ENCODE measurements at regions of chr2 and their contacts with region 1.

Region 1: GRCh38 chr2:225660262-225661131 is 261.0 kb downstream of the NYAP2 start:
- DNase-seq: peak; percentile 89
- ATAC-seq: peak; percentile 71
- H3K4me3 Mint-ChIP-seq: no peak overlapping the region
- H3K27ac Mint-ChIP-seq: no peak overlapping the region
- H3K4me1 Mint-ChIP-seq: no peaks in the 10 kb centered on the region
- H3K27me3 Mint-ChIP-seq: peaks cover 18% of the 10 kb centered on the region

Region 2: GRCh38 chr2:224357098-224357901 is 1303.2 kb before region 1 on chr2:
- CTCF ChIA-PET with region 1: no interaction called
- POLR2A ChIA-PET with region 1: no interaction called
- intact Hi-C with region 1: loop called in 1 of 2 experiments (anchors 1 kb)
- DNase-seq: peak; percentile 71
- ATAC-seq: peak; percentile 78
- H3K4me3 Mint-ChIP-seq: no peak overlapping the region
- H3K27ac Mint-ChIP-seq: no peak overlapping the region
- H3K4me1 Mint-ChIP-seq: no peaks in the 10 kb centered on the region
- H3K27me3 Mint-ChIP-seq: no peaks in the 10 kb centered on the region

Region 3: DNA sequence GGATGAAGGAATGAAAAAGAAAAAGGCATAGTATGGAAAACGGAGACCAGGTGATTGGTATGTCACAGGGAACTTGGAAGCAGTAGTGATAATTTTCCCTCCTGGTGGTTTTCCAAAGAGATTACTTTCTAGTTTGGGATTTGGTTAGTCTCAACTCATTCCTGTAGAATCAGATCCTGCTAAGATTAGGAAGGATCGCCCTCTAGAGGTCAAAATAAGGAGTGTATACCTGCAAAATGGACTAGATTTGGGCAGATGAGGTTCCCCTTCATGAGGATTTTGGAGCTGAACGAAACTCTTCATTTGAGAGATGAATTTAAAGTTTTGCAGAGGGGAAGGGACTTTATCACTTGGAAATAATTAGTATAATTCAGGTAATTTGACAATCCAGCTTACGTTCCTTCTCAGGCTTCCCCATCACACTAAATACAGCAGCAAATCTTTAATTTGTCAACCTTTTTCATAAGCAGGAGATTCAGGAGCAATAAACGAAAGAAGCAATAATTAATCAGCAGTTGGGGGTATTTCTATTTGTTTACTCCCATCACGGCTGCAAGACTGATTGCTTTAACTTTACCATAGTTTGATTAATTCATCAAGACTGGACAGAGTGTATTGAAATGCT is 1009.6 kb before region 1 on chr2:
- CTCF ChIA-PET with region 1: interaction called, 4 read pairs
- POLR2A ChIA-PET with region 1: no interaction called
- intact Hi-C with region 1: loop called in 1 of 2 experiments (anchors 2 kb)
- DNase-seq: no peak
- ATAC-seq: peak; percentile 53
- H3K4me3 Mint-ChIP-seq: no peak overlapping the region
- H3K27ac Mint-ChIP-seq: no peak overlapping the region
- H3K4me1 Mint-ChIP-seq: no peaks in the 10 kb centered on the region
- H3K27me3 Mint-ChIP-seq: peaks cover 2% of the 10 kb centered on the region

Region 4: DNA sequence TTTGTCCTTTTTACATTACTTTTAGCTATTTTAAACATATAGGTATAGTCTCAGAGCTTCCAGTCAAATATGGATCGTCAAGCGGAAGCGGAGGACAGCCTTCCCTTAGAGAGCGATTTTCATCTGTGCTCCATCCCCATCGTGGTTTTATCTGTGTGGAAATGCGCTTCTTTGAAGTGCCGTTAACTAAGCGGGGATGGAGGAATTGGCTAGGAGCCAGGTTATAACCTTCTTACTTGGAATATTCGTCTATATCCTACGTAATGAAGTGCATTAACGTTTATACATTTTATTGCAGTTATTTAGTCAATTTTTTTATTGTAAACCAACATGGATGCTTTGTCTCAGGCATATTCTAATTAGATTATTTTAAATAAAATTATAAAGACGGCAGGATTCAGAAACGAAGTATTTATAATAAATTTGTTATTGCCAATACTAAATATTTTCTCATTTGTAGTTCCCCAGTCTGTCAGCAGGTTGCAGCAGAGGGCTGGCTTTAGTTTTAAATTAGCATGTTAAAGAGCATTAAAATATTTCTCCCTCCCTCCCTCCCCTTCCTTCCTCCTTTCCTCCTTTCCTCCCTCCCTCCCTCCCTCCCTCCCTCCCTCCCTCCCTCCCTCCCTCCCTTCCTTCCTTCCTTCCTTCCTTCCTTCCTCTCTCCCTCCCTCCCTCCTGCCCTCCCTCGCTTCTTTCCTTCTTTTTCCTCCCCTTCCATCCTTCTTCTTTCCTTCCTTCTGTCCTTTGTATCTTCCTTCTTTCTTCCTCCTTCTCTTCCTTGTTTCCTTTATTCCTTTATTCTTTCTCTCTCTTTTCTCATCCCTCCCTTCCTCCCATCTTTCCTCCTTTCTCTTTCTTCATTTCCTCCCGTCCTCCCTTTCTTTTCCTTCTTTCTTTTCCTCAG is 537.7 kb before region 1 on chr2:
- CTCF ChIA-PET with region 1: interaction called, 16 read pairs
- POLR2A ChIA-PET with region 1: no interaction called
- intact Hi-C with region 1: loop called (anchors 1 kb)
- DNase-seq: peak; percentile 39
- ATAC-seq: no peak
- H3K4me3 Mint-ChIP-seq: no peak overlapping the region
- H3K27ac Mint-ChIP-seq: no peak overlapping the region
- H3K4me1 Mint-ChIP-seq: peaks cover 8% of the 10 kb centered on the region
- H3K27me3 Mint-ChIP-seq: peaks cover under 1% of the 10 kb centered on the region

Region 5: GRCh38 chr2:225282858-225283710 is 377.4 kb before region 1 on chr2:
- CTCF ChIA-PET with region 1: interaction called, 45 read pairs
- POLR2A ChIA-PET with region 1: no interaction called
- intact Hi-C with region 1: loop called (anchors 1 kb)
- DNase-seq: peak; percentile 25
- ATAC-seq: peak; percentile 73
- H3K4me3 Mint-ChIP-seq: no peak overlapping the region
- H3K27ac Mint-ChIP-seq: no peak overlapping the region
- H3K4me1 Mint-ChIP-seq: no peaks in the 10 kb centered on the region
- H3K27me3 Mint-ChIP-seq: no peaks in the 10 kb centered on the region

Region 6: DNA sequence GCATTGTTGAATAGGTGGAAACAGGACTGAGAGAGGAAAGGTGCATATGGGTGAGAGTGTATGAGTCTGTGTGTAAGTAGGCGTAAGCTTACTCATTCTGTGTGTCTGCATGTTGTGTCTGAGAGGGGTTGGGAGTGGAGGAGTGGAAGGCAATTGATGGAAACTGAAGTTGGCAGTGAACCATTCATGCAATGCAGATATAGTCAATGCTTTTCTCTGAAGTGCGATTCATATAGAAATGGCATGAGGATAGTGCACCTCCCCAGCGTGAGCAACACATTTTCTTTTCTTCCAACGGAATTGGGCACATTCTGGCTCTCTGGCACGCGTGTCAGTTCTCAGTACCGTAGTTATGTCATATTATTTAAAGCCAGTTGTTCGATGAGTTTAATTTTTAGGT is 10.5 kb before region 1 on chr2:
- CTCF ChIA-PET with region 1: interaction called, 19 read pairs
- POLR2A ChIA-PET with region 1: no interaction called
- intact Hi-C with region 1: no loop called
- DNase-seq: no peak
- ATAC-seq: peak; percentile 42
- H3K4me3 Mint-ChIP-seq: no peak overlapping the region
- H3K27ac Mint-ChIP-seq: no peak overlapping the region
- H3K4me1 Mint-ChIP-seq: no peaks in the 10 kb centered on the region
- H3K27me3 Mint-ChIP-seq: peaks cover 8% of the 10 kb centered on the region